Activated CD4-positive, alpha-beta T cell treated with anti-CD3 and anti-CD28 coated beads for 36 hours (primary cell): ENCODE measurements at regions of chr2 and their contacts with region 1.

Region 1: DNA sequence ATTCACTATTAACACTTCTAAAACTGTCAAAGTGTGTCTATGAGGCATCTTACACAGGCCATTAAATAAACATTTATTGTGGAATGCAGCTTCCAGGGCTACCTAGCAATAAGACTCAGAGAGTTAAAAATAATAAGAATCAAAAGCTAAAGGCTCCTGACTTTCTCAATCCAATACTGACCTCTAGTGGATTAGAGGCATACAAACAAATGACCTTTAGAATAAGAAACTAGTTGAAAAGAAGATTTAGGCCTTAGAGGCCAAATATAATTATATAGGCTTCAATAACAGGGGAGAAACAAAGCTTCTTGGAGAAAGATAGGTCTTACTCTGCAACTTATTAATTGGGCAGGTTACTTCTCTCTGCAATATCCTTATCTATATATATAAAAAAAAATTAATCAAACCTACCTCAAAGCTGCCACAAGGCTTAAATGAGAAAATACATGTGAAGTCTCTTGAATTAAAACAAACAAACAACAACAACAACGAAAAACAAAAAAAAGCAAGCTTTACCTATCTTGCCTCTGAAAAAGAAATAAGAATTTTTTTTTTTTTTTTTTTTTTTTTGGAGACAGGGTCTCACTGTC is 246.1 kb downstream of the EXOC6B start:
- DNase-seq: no peak
- ATAC-seq: no peak
- H3K4me3 Mint-ChIP-seq: no peak overlapping the region
- H3K27ac Mint-ChIP-seq: no peak overlapping the region
- H3K4me1 Mint-ChIP-seq: no peaks in the 10 kb centered on the region
- H3K27me3 Mint-ChIP-seq: no peaks in the 10 kb centered on the region

Region 2: GRCh38 chr2:71530641-71531332 is 1048.9 kb before region 1 on chr2:
- CTCF ChIA-PET with region 1: no interaction called
- POLR2A ChIA-PET with region 1: no interaction called
- intact Hi-C with region 1: loop called in 1 of 2 experiments (anchors 5 kb)
- DNase-seq: peak; percentile 46
- ATAC-seq: peak; percentile 65
- H3K4me3 Mint-ChIP-seq: no peak overlapping the region
- H3K27ac Mint-ChIP-seq: no peak overlapping the region
- H3K4me1 Mint-ChIP-seq: peaks cover 2% of the 10 kb centered on the region
- H3K27me3 Mint-ChIP-seq: peaks cover 29% of the 10 kb centered on the region

Region 3: GRCh38 chr2:71609958-71610357 is 969.7 kb before region 1 on chr2:
- CTCF ChIA-PET with region 1: no interaction called
- POLR2A ChIA-PET with region 1: no interaction called
- intact Hi-C with region 1: loop called in 1 of 2 experiments (anchors 5 kb)
- DNase-seq: no peak
- ATAC-seq: no peak
- H3K4me3 Mint-ChIP-seq: no peak overlapping the region
- H3K27ac Mint-ChIP-seq: no peak overlapping the region
- H3K4me1 Mint-ChIP-seq: peaks cover 2% of the 10 kb centered on the region
- H3K27me3 Mint-ChIP-seq: peaks cover 2% of the 10 kb centered on the region

Region 4: GRCh38 chr2:71923887-71924533 is 655.7 kb before region 1 on chr2:
- CTCF ChIA-PET with region 1: interaction called, 19 read pairs
- POLR2A ChIA-PET with region 1: no interaction called
- intact Hi-C with region 1: loop called (anchors 1 kb)
- DNase-seq: peak; percentile 77
- ATAC-seq: peak; percentile 63
- H3K4me3 Mint-ChIP-seq: no peak overlapping the region
- H3K27ac Mint-ChIP-seq: no peak overlapping the region
- H3K4me1 Mint-ChIP-seq: no peaks in the 10 kb centered on the region
- H3K27me3 Mint-ChIP-seq: no peaks in the 10 kb centered on the region

Region 5: GRCh38 chr2:72630767-72631166 is 51.1 kb after region 1 on chr2:
- CTCF ChIA-PET with region 1: no interaction called
- POLR2A ChIA-PET with region 1: no interaction called
- intact Hi-C with region 1: no loop called
- DNase-seq: no peak
- ATAC-seq: no peak
- H3K4me3 Mint-ChIP-seq: no peak overlapping the region
- H3K27ac Mint-ChIP-seq: no peak overlapping the region
- H3K4me1 Mint-ChIP-seq: no peaks in the 10 kb centered on the region
- H3K27me3 Mint-ChIP-seq: no peaks in the 10 kb centered on the region

Region 6: DNA sequence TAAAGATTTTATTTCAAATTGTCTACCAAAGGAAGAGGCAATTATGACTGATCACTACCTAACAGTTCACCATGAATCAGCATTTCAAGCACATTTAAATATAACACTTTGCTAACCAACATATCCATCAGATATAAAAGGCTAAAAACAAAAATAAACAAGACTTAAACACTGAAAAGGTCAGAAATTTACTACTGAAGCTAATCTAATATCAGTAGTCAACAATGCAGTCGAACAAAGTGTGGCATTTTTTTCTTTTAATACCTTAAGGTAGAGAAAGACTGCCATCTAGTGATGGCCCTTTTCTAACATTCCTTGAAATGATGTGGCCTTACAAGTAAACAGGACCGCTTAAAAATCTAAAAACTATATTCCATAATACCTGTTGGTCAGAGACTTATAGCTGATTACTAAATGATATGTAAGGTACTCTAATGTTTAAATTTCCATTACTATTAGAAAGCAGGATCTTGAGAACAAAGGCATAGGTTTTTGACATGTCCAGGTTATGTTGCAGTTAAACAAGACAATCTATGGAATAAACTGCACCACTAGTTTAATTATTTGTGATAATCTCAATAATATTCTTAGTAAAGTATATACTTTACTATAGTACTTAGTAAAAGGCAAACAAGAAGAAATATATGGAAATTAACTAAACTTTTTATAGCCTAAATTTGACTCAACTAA is 166.1 kb after region 1 on chr2:
- CTCF ChIA-PET with region 1: interaction called, 3 read pairs
- POLR2A ChIA-PET with region 1: no interaction called
- intact Hi-C with region 1: loop called in 1 of 2 experiments (anchors 10 kb)
- DNase-seq: no peak
- ATAC-seq: no peak
- H3K4me3 Mint-ChIP-seq: no peak overlapping the region
- H3K27ac Mint-ChIP-seq: no peak overlapping the region
- H3K4me1 Mint-ChIP-seq: no peaks in the 10 kb centered on the region
- H3K27me3 Mint-ChIP-seq: no peaks in the 10 kb centered on the region